ENCODE measurements at regions of chr12 and their contacts with region 1.

Region 1: DNA sequence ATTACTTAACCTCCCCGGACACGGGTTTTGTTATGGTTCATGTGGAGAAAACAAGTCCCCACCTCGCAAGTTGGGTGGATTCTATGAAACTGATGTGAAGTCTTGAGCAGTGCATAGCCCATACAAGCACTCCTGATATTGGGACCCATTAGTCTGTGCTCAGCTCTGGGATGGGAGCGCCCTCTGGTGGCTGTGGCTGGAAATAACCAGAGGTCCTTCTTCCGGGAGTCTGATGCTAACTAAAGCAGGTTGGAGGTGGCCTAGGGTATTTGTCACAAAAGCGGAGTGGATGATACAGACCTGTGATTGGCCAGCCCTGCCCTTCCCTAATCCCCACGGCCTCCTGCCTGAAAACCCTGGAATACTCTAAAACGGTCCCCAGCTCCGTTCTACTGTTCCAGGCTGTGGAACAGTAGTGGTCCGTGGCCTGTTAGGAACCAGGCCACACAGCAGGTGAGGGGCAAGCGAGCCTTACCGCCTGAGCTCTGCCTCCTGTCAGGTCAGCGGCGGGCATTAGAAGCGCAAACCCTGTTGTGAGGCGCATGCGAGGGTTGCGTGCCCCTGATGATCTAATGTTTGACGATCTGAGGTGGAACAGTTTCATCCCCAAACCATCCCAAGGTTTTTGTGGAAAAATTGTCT is 6.4 kb downstream of the SLC48A1 start:
- DNase-seq: peak; percentile 89 to 96 (median 92)
- H3K4me3 ChIP-seq: peak overlapping the region in 36 of 59 donors; percentile 1 to 98 (median 24)
- H3K27ac ChIP-seq: peak overlapping the region; percentile 86 to 100 (median 99)
- H3K27me3 ChIP-seq: no peaks in the 10 kb centered on the region
- CTCF ChIP-seq: peak; percentile 88 to 99 (median 96)

Region 2: DNA sequence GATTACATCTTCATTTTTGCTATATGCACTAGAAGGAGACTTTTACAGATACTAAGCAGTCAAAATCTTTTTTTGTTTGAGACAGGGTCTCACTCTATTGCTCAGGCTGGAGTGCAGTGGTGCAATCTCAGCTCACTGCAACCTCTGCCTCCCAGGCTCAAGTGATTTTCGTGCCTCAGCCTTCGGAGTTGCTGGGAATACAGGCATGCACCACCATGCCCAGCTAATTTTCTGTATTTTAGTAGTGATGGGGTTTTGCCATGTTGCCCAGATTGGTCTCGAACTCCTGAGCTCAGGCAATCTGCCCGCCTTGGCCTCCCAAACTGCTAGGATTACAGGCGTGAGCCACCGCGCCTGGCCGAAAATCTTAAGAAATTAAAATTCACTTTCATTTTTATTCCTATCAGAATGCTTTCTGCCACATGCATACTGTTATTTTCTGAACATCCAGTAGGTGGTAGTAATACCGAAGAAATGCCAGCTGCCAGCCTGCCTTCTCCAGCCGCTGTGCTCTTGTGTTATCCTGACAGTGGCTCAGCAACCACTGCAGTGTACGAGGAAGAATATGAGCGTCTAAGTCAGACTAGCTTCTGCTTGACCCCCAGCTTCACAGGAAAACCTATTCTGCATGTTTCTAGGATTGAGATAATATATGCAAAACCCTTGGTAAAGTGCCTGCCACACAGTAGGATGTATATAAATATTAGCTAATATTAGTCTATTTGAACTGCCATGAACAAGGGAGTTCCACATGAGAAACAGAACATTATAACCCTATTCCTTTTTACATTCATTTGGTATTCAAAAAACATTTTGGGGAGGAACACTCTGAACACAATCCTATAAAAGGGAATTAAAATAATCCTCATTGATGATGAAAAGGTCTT is 127.8 kb before region 1 on chr12:
- intact Hi-C with region 1: loop called in 1 of 2 experiments (anchors 5 kb)
- DNase-seq: peak; percentile 23 to 79 (median 62)
- H3K4me3 ChIP-seq: peak overlapping the region in 40 of 59 donors; percentile 2 to 57 (median 33)
- H3K27ac ChIP-seq: peak overlapping the region in 39 of 59 donors; percentile 2 to 71 (median 47)
- H3K27me3 ChIP-seq: no peaks in the 10 kb centered on the region
- CTCF ChIP-seq: peak; percentile 64 to 92 (median 81)

Region 3: DNA sequence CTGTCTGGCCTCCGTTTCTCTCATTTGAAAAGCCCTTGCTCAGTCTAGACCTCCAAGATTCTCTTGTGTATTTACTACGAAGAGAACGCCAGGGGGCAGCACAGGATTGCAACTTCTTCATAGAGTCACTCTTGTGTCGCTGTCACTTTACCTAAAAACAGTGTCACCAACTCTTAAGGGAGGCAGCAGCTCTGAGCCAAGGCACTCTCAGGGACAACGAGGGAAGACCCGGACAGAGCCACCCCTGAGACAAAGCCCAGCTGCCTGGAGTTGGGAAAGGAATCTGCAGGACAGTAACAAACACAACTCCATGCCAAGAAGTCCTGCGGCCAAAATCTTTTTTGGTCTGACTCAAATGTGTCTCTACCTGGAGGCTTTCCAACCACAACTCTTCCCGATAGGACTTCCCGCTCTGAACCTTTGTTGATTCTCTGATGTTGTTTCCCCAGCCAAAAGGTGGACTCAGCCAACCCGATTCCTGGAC is 64.0 kb before region 1 on chr12:
- intact Hi-C with region 1: loop called (anchors 1 kb)
- DNase-seq: peak; percentile 64 to 92 (median 86)
- H3K4me3 ChIP-seq: peak overlapping the region in 6 of 59 donors; percentile 4 to 23 (median 6)
- H3K27ac ChIP-seq: peak overlapping the region in 30 of 59 donors; percentile 1 to 93 (median 51)
- H3K27me3 ChIP-seq: no peaks in the 10 kb centered on the region
- CTCF ChIP-seq: peak; percentile 72 to 97 (median 89)

Region 4: GRCh38 chr12:47741340-47741703 is 38.1 kb before region 1 on chr12:
- intact Hi-C with region 1: loop called (anchors 2 kb)
- DNase-seq: peak; percentile 54 to 99 (median 96)
- H3K4me3 ChIP-seq: peak overlapping the region in 5 of 59 donors; percentile 5 to 30 (median 21)
- H3K27ac ChIP-seq: peak overlapping the region; percentile 61 to 98 (median 95)
- H3K27me3 ChIP-seq: no peaks in the 10 kb centered on the region
- CTCF ChIP-seq: peak in 2 of 56 donors; percentile 13 to 39

Region 5: GRCh38 chr12:47758834-47759690 is 20.4 kb before region 1 on chr12 and contains the start of gene RAPGEF3:
- intact Hi-C with region 1: loop called in 1 of 2 experiments (anchors 2 kb)
- DNase-seq: peak; percentile 69 to 93 (median 88)
- H3K4me3 ChIP-seq: peak within 1 kb of the TSS; percentile 46 to 91 (median 73)
- H3K27ac ChIP-seq: peak within 1 kb of the TSS; percentile 74 to 97 (median 95)
- H3K27me3 ChIP-seq: no peaks in the 10 kb centered on the region
- CTCF ChIP-seq: peak in 55 of 56 donors; percentile 31 to 78 (median 57)
- total RNA-seq, gene RAPGEF3: 33.3 to 206 (median 93.7) TPM

Region 6: GRCh38 chr12:47819896-47820630 is 40.6 kb after region 1 on chr12 and contains the start of gene HDAC7:
- intact Hi-C with region 1: loop called in 1 of 2 experiments (anchors 5 kb)
- DNase-seq: peak; percentile 63 to 84 (median 71)
- H3K4me3 ChIP-seq: peak within 1 kb of the TSS; percentile 55 to 79 (median 69)
- H3K27ac ChIP-seq: peak within 1 kb of the TSS; percentile 50 to 98 (median 94)
- H3K27me3 ChIP-seq: no peaks in the 10 kb centered on the region
- CTCF ChIP-seq: peak in 14 of 56 donors; percentile 2 to 42 (median 18)
- total RNA-seq, gene HDAC7: 25.9 to 77.6 (median 46.8) TPM

Region 7: GRCh38 chr12:47837190-47838171 is 58.1 kb after region 1 on chr12:
- intact Hi-C with region 1: loop called in 1 of 2 experiments (anchors 1 kb)
- DNase-seq: peak in 9 of 10 donors; percentile 60 to 79 (median 65)
- H3K4me3 ChIP-seq: no peak overlapping the region
- H3K27ac ChIP-seq: peak overlapping the region in 4 of 59 donors; percentile 20 to 51 (median 40)
- H3K27me3 ChIP-seq: no peaks in the 10 kb centered on the region
- CTCF ChIP-seq: peak; percentile 84 to 99 (median 93)